SK-N-SH (cell line): ENCODE measurements at regions of chr17 and their contacts with region 1.

Region 1: GRCh38 chr17:40075201-40075941 is 12.6 kb downstream of the THRA start:
- DNase-seq: peak; percentile 83
- H3K4me3 ChIP-seq: no peak overlapping the region; a peak in 1 of 4 replicates
- H3K27ac ChIP-seq: peak overlapping the region; percentile 54 to 76; a peak in 3 of 4 replicates
- H3K4me1 ChIP-seq: peaks cover 32 to 59% of the 10 kb centered on the region in 2 experiments; a peak in 3 of 4 replicates
- H3K27me3 ChIP-seq: no peaks in the 10 kb centered on the region
- CTCF ChIP-seq: peak; percentile 88
- EP300 ChIP-seq: peak in 1 of 2 experiments; percentile 12; a peak in 1 of 4 replicates
- RAD21 ChIP-seq: peak; percentile 69

Region 2: GRCh38 chr17:40026816-40027613 is 48.4 kb before region 1 on chr17:
- CTCF ChIA-PET with region 1: interaction called, 67 read pairs
- POLR2A ChIA-PET with region 1: no interaction called
- DNase-seq: peak; percentile 93
- H3K4me3 ChIP-seq: no peak overlapping the region
- H3K27ac ChIP-seq: no peak overlapping the region
- H3K4me1 ChIP-seq: no peaks in the 10 kb centered on the region; a peak in 1 of 4 replicates
- H3K27me3 ChIP-seq: no peaks in the 10 kb centered on the region
- CTCF ChIP-seq: peak; percentile 89
- EP300 ChIP-seq: no peak
- RAD21 ChIP-seq: peak; percentile 62

Region 3: GRCh38 chr17:40056379-40057010 is 18.9 kb before region 1 on chr17:
- CTCF ChIA-PET with region 1: interaction called, 160 read pairs
- POLR2A ChIA-PET with region 1: no interaction called
- DNase-seq: no peak
- H3K4me3 ChIP-seq: no peak overlapping the region
- H3K27ac ChIP-seq: no peak overlapping the region
- H3K4me1 ChIP-seq: peaks cover 0 to 11% of the 10 kb centered on the region in 2 experiments; a peak in 2 of 4 replicates
- H3K27me3 ChIP-seq: no peaks in the 10 kb centered on the region
- CTCF ChIP-seq: no peak
- EP300 ChIP-seq: no peak
- RAD21 ChIP-seq: no peak

Region 4: DNA sequence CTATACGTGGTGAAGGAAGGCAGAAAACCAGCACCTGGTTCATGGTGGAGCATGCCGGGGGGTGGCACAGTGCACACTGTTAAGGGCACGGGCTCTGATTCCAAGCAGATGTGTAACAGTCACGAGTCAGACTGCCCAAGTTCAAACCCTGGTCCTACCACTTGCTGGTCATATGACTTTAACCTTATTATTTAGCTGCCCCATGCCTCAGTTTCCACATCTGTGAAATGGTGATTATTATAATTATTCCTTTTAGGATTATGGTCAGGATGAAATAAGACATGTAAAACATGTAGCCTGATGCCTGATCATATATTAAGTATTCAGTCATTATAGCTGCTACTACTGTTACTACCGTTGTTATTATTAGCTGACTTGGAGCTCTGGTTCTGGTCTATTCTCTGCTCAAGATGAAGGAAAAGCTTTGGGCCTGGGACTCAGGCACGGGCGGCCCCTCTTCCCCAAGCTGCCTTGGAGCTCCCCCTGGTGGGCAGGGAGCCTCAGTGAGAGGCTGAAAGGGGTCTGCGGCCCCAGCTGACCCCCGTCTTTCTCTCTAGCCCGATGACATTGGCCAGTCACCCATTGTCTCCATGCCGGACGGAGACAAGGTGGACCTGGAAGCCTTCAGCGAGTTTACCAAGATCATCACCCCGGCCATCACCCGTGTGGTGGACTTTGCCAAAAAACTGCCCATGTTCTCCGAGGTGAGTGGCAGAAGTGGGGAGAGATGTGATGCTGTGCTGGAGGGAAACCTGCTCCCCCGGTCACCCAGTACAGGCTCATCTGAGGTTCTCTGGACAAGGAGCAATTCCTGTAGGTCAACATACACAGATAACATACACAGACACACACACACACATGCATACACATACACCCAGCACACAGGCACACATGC is 11.0 kb after region 1 on chr17:
- CTCF ChIA-PET with region 1: interaction called, 54 read pairs
- POLR2A ChIA-PET with region 1: no interaction called
- DNase-seq: peak; percentile 92
- H3K4me3 ChIP-seq: peak overlapping the region in 1 of 2 experiments; percentile 32; a peak in 1 of 4 replicates
- H3K27ac ChIP-seq: no peak overlapping the region
- H3K4me1 ChIP-seq: no peaks in the 10 kb centered on the region
- H3K27me3 ChIP-seq: no peaks in the 10 kb centered on the region
- CTCF ChIP-seq: peak; percentile 86
- EP300 ChIP-seq: no peak
- RAD21 ChIP-seq: peak; percentile 85

Region 5: GRCh38 chr17:40098846-40099618 is 23.7 kb after region 1 on chr17:
- CTCF ChIA-PET with region 1: interaction called, 47 read pairs
- POLR2A ChIA-PET with region 1: interaction called, 9 read pairs
- DNase-seq: peak; percentile 97
- H3K4me3 ChIP-seq: peak overlapping the region; percentile 73 to 96
- H3K27ac ChIP-seq: peak overlapping the region; percentile 74 to 95
- H3K4me1 ChIP-seq: peaks cover 14 to 28% of the 10 kb centered on the region in 2 experiments; a peak in 1 of 4 replicates
- H3K27me3 ChIP-seq: no peaks in the 10 kb centered on the region
- CTCF ChIP-seq: no peak
- EP300 ChIP-seq: peak; percentile 16 to 81; a peak in 2 of 4 replicates
- RAD21 ChIP-seq: no peak